GM18951 (cell line): ENCODE measurements at regions of chr2 and their contacts with region 1.

Region 1: GRCh38 chr2:47386551-47386950 is 16.4 kb upstream of the MSH2 start:
- POLR2A ChIP-seq: no peak

Region 2: DNA sequence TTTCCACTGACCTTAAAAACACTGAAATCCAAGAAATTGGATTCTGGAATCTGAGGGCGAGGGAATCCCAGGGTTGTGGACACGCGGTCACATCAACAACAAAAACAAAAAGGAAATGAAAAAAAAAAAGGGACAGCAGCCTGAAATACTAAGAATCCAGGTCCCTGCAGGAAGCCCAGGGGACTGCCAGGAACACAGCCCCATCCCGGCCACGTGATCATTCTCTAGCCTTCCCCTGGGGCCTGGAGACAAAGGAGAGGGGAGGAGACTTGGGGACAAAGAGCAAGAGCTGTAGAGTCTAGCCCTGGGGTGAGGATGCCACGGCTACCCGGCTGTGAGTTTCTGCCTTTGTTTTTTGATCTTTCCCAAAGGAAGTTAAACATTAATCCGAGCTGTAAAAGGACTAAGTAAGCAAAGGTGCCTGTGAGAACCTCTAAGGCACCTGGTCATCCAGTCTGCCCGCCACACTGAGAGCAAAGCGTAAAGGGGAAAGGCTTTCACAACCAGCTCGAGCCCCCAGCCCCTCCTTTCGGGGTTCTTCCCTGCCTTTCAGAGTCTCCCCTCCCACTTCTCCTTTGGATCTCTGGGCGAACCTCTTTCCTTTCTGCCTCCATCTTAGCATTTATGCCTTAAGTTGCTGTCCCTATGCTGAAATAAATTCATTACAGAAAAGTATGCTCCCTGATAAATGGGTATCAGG is 41.5 kb before region 1 on chr2:
- in situ Hi-C with region 1: loop called (anchors 5 kb)
- POLR2A ChIP-seq: no peak